ENCODE measurements at regions of chr4 and their contacts with region 1.

Region 1: DNA sequence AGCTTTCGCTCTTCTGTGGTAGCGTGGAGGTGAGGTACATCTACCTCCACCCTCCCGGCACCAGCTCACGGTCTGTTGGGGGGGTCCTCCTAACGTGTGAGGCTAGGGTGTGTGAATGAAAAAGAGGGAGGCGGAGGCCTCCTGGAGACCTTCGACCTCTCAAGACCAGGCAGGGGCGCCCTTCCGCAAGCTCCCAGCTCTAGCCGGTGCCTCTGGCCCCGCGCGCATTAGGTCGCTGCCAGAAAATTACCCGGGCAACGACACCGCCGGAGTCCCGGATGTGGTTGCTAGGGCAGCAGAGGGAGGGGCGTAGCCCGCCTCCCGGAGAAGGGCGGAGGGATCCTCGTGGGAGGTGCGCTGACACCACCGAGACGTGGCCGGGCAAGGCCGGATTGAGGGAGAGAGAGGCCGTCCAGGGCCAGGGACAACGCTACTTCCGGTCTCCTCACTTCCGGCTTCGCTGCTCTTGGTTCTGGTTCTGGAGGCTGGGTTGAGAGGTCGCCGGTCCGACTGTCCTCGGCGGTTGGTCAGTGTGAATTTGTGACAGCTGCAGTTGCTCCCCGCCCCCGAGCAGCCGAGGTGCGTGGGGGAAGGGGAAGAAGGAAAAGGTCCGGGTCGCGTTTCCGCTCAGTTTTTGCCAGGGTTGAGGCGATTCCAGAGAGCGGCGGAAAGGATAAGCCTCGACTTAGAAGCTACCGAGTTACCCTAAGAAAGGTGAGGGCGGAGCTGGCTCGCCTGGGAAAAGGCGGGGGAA is at the starts of genes ARFIP1 and TIGD4:
- DNase-seq: peak; percentile 95
- H3K4me3 Mint-ChIP-seq: peak within 1 kb of the TSS; percentile 96
- H3K27ac Mint-ChIP-seq: peak within 1 kb of the TSS; percentile 94
- H3K4me1 Mint-ChIP-seq: peaks cover 42% of the 10 kb centered on the region
- H3K27me3 Mint-ChIP-seq: peaks cover 20% of the 10 kb centered on the region
- total RNA-seq, gene ARFIP1: 16.6 and 16.7 TPM in 2 replicates
- total RNA-seq, gene TIGD4: 0.23 and 0.28 TPM in 2 replicates

Region 2: GRCh38 chr4:151760712-151761527 is 1018.8 kb before region 1 on chr4 and contains the start of gene GATB:
- intact Hi-C with region 1: loop called (anchors 10 kb)
- DNase-seq: peak; percentile 88
- H3K4me3 Mint-ChIP-seq: peak within 1 kb of the TSS; percentile 100
- H3K27ac Mint-ChIP-seq: peak within 1 kb of the TSS; percentile 99
- H3K4me1 Mint-ChIP-seq: peaks cover 12% of the 10 kb centered on the region
- H3K27me3 Mint-ChIP-seq: peaks cover 2% of the 10 kb centered on the region
- total RNA-seq, gene GATB: 17.7 and 19.6 TPM in 2 replicates

Region 3: DNA sequence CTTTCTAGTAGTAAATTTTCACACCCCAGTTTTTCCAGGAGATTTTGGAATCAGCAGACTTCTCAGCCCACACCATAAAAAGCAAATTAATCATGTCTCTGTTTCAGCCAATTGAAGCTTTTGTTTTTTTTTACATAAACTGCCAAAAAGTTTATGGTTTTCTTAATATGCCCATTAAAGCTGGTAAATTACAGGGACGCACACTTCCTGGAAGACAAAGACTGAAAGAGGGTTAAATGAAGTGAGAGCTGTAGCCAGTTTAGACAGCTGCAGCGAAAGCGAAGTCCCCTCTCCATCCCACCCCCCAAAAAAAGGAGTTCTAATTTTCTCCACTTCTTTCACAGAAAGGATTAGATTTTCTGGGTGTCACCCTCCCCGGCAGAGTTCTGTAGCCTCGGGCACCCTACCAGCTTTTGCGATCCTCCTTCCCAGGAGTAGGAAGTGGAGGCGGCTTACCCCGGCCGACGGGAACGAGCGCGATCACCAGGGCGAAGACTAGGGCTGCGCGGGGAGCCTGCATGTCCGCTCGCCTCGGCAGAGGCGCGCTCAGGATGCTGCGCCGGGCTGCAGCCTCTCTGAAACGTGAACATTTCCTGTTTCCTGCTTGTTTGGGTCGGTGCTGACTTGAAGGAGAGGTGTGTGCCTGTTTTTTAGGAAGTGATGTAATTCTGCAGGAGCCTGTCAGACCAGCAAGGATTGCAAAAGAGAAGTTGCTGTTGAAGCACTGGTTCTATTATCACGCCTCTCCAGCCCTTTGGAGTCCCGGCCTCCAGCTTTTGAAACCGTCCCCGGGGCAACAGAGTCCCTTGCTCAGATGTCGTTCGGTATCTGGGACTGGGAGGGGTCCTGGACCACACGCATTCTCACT is 100.0 kb before region 1 on chr4 and contains the start of gene TMEM154:
- intact Hi-C with region 1: loop called (anchors 5 kb)
- DNase-seq: peak; percentile 71
- H3K4me3 Mint-ChIP-seq: peak within 1 kb of the TSS; percentile 87
- H3K27ac Mint-ChIP-seq: peak within 1 kb of the TSS; percentile 71
- H3K4me1 Mint-ChIP-seq: peaks cover 55% of the 10 kb centered on the region
- H3K27me3 Mint-ChIP-seq: no peaks in the 10 kb centered on the region
- total RNA-seq, gene TMEM154: 10.3 and 12.1 TPM in 2 replicates

Region 4: DNA sequence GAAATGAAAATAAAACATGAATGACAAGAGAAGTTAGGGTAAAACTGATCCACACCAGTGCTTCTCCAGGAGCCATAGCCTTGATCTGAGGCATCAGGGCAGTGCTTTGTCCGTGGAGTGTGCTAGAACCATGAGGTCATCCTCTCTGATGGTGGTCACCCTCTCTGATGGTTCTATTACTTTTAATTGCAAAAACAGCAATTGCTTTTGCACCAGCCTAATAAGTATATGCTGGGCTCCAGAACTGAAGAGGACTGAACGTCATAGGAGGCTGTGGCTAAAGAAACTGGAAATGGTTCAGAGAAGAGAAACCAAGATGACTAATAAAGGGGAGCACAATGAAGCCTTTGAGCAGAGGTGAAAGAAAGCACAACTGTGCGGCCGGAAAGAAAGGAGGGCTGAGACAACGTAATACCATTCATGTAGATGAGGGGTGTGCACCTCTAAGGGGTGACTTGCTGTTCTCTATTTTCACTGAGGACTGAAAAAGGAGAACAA is 82.9 kb before region 1 on chr4:
- intact Hi-C with region 1: no loop called
- DNase-seq: peak; percentile 41
- H3K4me3 Mint-ChIP-seq: no peak overlapping the region
- H3K27ac Mint-ChIP-seq: no peak overlapping the region
- H3K4me1 Mint-ChIP-seq: peaks cover 13% of the 10 kb centered on the region
- H3K27me3 Mint-ChIP-seq: peaks cover 4% of the 10 kb centered on the region

Region 5: DNA sequence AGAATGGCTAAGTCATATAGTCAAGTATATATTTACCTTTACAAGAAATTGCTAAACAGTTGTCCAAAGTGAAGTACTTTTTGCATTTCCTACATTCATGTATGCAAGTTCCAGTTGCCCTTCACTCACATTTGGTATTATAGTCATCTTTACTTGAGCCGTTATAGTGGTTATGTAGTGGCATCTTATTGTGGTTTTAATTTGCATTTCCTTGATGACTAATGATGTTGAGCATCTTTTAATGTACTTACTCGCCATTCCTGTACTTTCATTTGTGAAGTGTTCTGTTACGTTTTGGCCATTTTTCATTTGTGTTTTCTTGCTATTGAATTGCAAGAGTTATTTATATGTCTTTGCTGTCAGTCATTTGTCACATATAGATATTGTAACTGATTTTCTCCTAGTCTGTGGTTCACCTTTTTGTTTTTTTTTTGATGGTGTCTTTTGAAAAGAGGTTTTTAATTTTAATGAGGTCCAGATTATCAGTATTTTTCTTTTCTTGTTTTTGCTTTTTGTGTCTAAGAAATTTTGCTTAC is 27.7 kb after region 1 on chr4:
- intact Hi-C with region 1: loop called (anchors 1 kb)
- DNase-seq: no peak
- H3K4me3 Mint-ChIP-seq: peak overlapping the region; percentile 9
- H3K27ac Mint-ChIP-seq: peak overlapping the region; percentile 71
- H3K4me1 Mint-ChIP-seq: peaks cover 38% of the 10 kb centered on the region
- H3K27me3 Mint-ChIP-seq: no peaks in the 10 kb centered on the region

Region 6: GRCh38 chr4:152820073-152820472 is 40.4 kb after region 1 on chr4:
- intact Hi-C with region 1: no loop called
- DNase-seq: no peak
- H3K4me3 Mint-ChIP-seq: no peak overlapping the region
- H3K27ac Mint-ChIP-seq: no peak overlapping the region
- H3K4me1 Mint-ChIP-seq: peaks cover 21% of the 10 kb centered on the region
- H3K27me3 Mint-ChIP-seq: no peaks in the 10 kb centered on the region

Region 7: DNA sequence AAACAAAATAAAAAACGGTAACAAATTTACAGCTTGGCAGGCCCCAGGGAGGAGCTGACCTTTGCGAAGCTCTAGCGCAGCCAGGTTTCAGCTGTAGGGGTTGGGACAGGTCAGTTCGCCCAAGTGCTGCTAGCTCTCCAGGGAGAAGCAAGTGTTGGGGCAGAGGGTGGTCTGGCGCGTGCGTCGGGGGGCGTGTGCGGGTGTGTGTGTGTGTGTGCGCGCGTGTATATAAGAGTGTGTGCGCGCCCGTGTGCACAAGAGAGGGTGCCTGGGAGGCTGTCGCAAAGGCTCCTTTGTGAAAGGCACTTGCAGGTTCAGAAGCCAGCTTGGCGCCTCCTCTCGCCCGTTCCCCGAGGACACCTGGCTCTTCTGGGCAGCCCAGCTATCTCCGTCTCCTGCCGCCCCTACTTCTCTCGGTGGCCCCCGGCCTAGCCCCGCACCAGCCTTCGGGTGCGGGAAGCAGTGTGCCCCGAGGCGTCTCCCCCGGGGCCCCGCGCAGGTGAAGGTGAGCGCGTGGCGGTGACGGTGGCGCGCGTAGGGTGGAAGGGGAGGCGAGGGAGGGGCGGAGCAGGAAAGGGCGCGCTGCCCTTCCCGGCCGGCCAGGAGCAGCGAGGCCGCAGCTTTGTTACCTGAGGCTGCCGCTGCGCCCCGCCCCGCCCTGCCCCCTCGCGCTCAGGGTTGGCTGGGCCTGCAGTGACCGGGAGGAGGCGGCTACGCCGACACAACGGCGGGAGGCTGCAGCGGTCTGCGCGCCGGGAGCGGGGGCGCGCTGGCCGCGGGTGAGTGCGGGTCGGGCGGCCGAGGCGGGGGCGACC is 156.1 kb after region 1 on chr4 and contains the start of gene FHDC1:
- intact Hi-C with region 1: loop called (anchors 1 kb)
- DNase-seq: no peak
- H3K4me3 Mint-ChIP-seq: peak within 1 kb of the TSS; percentile 65
- H3K27ac Mint-ChIP-seq: no peak within 1 kb of the TSS
- H3K4me1 Mint-ChIP-seq: peaks cover 17% of the 10 kb centered on the region
- H3K27me3 Mint-ChIP-seq: peaks cover 65% of the 10 kb centered on the region
- total RNA-seq, gene FHDC1: 0.07 TPM in 2 replicates

Region 8: GRCh38 chr4:153115322-153116290 is 335.9 kb after region 1 on chr4:
- intact Hi-C with region 1: loop called (anchors 10 kb)
- DNase-seq: peak; percentile 72
- H3K4me3 Mint-ChIP-seq: peak overlapping the region; percentile 40
- H3K27ac Mint-ChIP-seq: no peak overlapping the region
- H3K4me1 Mint-ChIP-seq: peaks cover 14% of the 10 kb centered on the region
- H3K27me3 Mint-ChIP-seq: peaks cover 19% of the 10 kb centered on the region

Measured in activated T-helper 2 cell treated with anti-CD3 and anti-CD28 coated beads, Interferon-gamma antibody, Interleukin-2, Interleukin-4, amounts not matched to agents 10 μg/mL and 5 μg/mL and 100 μg/mL, durations not matched to agents 14 hours and 24 hours and 36 hours (primary cell).